Breast epithelium (tissue), 4 donors: ENCODE measurements at regions of chr11 and their contacts with region 1.

Region 1: GRCh38 chr11:1822648-1823396 is 12.0 kb upstream of the SYT8 start:
- DNase-seq: peak in 1 of 2 donors; percentile 33
- H3K4me3 ChIP-seq: no peak overlapping the region
- H3K27ac ChIP-seq: no peak overlapping the region
- H3K4me1 ChIP-seq: peaks cover 4 to 10% of the 10 kb centered on the region in 2 donors
- H3K27me3 ChIP-seq: no peaks in the 10 kb centered on the region
- CTCF ChIP-seq: no peak
- POLR2A ChIP-seq: no peak

Region 2: DNA sequence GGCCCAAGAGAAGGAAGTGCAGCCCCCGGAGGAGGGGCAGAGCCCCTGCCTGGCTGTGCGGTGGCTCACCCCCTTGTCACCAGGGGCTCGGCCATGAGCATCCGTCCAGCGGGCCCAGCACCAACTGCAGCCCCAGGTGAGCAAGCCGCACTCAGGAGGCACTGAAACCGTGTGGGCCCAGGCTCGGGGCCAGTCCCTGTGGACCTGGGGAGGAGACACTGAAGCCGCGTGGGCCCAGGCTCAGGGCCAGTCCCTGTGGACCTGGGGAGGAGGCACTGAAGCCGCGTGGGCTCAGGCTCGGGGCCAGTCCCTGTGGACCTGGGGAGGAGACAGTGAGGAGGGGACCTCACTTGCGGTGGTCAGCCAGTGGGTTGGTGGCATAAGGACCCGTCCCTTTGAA is 44.0 kb after region 1 on chr11:
- intact Hi-C with region 1: loop called (anchors 1 kb)
- DNase-seq: no peak
- H3K4me3 ChIP-seq: peak overlapping the region in 1 of 3 donors; percentile 11
- H3K27ac ChIP-seq: peak overlapping the region; percentile 2 to 97
- H3K4me1 ChIP-seq: peaks cover 9 to 17% of the 10 kb centered on the region in 2 donors
- H3K27me3 ChIP-seq: no peaks in the 10 kb centered on the region
- CTCF ChIP-seq: no peak
- POLR2A ChIP-seq: no peak